PC-3 (cell line): ENCODE measurements at regions of chr2 and their contacts with region 1.

Region 1: GRCh38 chr2:232142049-232142448 is 180.5 kb downstream of the DIS3L2 start:
- DNase-seq: peak; percentile 43
- ATAC-seq: peak; percentile 17; the same call in 1 of the 2 replicates
- H3K4me3 ChIP-seq: no peak overlapping the region
- H3K27ac ChIP-seq: no peak overlapping the region
- H3K4me1 ChIP-seq: peaks cover 11% of the 10 kb centered on the region
- H3K27me3 ChIP-seq: no peaks in the 10 kb centered on the region
- CTCF ChIP-seq: peak; percentile 88

Region 2: DNA sequence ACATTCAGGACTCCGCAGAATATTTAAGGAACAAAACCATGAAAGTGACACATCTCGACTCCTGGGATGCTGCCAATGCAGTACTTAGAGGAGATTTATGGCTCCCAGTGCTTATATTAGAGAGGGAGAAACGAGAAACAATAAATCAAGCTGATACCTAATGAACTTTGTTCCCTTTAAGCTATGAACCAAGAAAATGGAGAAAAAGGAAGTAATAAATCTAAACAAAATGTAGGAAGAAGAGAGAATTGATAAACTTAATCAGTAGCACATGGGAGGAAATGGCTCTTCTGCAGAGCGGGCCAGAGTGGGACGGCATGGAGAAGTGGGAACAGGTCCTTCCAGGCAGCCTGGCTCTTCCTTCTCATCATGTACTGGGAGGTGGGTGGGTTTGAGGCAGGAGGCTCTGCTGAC is 258.6 kb before region 1 on chr2:
- CTCF ChIA-PET with region 1: interaction called, 20 read pairs
- POLR2A ChIA-PET with region 1: no interaction called
- intact Hi-C with region 1: no loop called
- DNase-seq: no peak
- ATAC-seq: no peak
- H3K4me3 ChIP-seq: no peak overlapping the region
- H3K27ac ChIP-seq: no peak overlapping the region
- H3K4me1 ChIP-seq: no peaks in the 10 kb centered on the region
- H3K27me3 ChIP-seq: peaks cover 32% of the 10 kb centered on the region
- CTCF ChIP-seq: no peak

Region 3: GRCh38 chr2:231925303-231926179 is 216.5 kb before region 1 on chr2:
- CTCF ChIA-PET with region 1: interaction called, 3 read pairs
- POLR2A ChIA-PET with region 1: no interaction called
- intact Hi-C with region 1: loop called (anchors 1 kb)
- DNase-seq: peak; percentile 74
- ATAC-seq: peak; percentile 91
- H3K4me3 ChIP-seq: peak overlapping the region; percentile 63
- H3K27ac ChIP-seq: no peak overlapping the region
- H3K4me1 ChIP-seq: 0 out of 2 replicates have a peak, but pooled peaks cover 8% of the 10 kb centered on the region
- H3K27me3 ChIP-seq: peaks cover 25% of the 10 kb centered on the region
- CTCF ChIP-seq: peak; percentile 83

Region 4: GRCh38 chr2:232228971-232229894 is 87.2 kb after region 1 on chr2:
- CTCF ChIA-PET with region 1: no interaction called
- POLR2A ChIA-PET with region 1: no interaction called
- intact Hi-C with region 1: loop called (anchors 5 kb)
- DNase-seq: no peak
- ATAC-seq: no peak
- H3K4me3 ChIP-seq: no peak overlapping the region
- H3K27ac ChIP-seq: no peak overlapping the region
- H3K4me1 ChIP-seq: no peaks in the 10 kb centered on the region
- H3K27me3 ChIP-seq: no peaks in the 10 kb centered on the region
- CTCF ChIP-seq: no peak

Region 5: DNA sequence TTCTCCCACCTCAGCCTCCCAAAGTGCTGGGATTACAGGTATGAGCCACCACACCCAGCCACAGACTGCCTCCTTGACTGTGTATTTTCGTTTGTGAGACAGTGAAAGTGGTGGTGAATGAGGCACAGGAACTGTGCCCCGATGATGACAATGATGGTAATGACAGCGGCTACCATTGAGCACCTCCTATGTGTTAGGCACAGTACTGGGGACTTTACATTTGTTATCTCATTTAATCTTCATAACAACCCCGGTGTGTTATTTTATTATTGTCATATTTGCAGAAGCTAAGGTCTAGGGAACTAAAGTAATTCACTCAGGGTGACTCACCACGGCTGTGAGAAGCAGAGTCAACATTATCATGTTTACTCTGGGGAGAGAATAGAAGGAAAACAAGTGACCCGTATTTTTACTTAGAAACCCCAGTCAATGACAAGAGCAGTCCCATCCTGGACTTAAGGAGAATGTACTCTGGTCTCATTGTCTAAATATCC is 158.9 kb after region 1 on chr2:
- CTCF ChIA-PET with region 1: no interaction called
- POLR2A ChIA-PET with region 1: no interaction called
- intact Hi-C with region 1: loop called (anchors 2 kb)
- DNase-seq: peak; percentile 95
- ATAC-seq: peak; percentile 98
- H3K4me3 ChIP-seq: no peak overlapping the region
- H3K27ac ChIP-seq: peak overlapping the region; percentile 84
- H3K4me1 ChIP-seq: peaks cover 16% of the 10 kb centered on the region
- H3K27me3 ChIP-seq: no peaks in the 10 kb centered on the region
- CTCF ChIP-seq: peak; percentile 50

Region 6: DNA sequence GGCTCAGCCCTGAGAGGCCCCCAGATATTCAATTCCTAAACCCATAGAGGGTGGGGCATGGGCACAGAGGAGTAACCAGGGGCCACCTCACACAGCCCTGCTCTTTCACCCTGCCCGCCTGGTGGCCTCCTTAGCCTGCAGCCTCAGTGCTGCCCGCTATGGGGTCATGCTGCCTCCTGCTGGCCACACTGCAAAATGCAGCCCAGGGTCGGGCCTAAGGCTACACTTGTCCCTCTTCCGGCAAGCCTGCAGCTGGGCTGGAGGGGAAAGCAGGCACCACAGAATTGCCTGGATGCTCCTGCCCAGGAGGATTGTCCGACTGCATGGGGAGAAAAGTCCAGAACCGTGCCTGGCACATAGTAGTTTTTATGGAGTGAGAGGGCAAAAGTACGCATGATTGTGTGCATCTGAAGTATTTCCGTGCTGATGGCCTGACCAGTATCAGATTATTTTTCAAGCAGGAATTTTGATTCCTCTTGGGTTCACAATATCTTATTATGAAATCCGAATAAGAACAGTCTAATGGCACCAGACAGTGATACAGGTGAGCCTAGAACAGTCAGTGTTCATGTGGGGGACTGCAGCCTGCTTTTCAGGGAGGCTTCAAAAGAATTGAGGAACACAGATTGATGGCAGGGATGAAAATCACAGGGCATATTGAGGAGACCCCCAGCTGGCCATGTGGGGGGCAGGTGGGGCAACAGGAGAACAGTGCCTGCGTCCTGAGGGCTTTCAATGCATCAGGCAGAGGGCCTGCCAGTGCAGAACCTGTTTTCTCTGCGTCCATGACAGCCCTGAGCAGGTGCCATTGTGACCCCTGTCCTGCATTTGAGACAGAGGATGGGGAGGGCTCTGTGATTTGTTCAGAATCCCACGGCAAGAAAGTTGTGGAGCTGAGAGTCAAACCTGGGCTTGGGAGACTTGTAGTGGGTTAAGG is 185.3 kb after region 1 on chr2:
- CTCF ChIA-PET with region 1: no interaction called
- POLR2A ChIA-PET with region 1: no interaction called
- intact Hi-C with region 1: loop called (anchors 10 kb)
- DNase-seq: peak; percentile 81
- ATAC-seq: peak; percentile 86
- H3K4me3 ChIP-seq: no peak overlapping the region
- H3K27ac ChIP-seq: no peak overlapping the region
- H3K4me1 ChIP-seq: no peaks in the 10 kb centered on the region
- H3K27me3 ChIP-seq: no peaks in the 10 kb centered on the region
- CTCF ChIP-seq: peak; percentile 69